Activated CD4-positive, alpha-beta T cell treated with anti-CD3 and anti-CD28 coated beads, Interleukin-2, amount 10 ng/mL, durations not matched to agents 24 days and 14 days (primary cell): ENCODE measurements at regions of chr4 and their contacts with region 1.

Region 1: GRCh38 chr4:145829629-145830395 is 108.8 kb downstream of the ZNF827 start:
- DNase-seq: peak; percentile 70
- H3K4me3 Mint-ChIP-seq: peak overlapping the region; percentile 76
- H3K27ac Mint-ChIP-seq: peak overlapping the region; percentile 87
- H3K4me1 Mint-ChIP-seq: peaks cover 43% of the 10 kb centered on the region
- H3K27me3 Mint-ChIP-seq: no peaks in the 10 kb centered on the region

Region 2: DNA sequence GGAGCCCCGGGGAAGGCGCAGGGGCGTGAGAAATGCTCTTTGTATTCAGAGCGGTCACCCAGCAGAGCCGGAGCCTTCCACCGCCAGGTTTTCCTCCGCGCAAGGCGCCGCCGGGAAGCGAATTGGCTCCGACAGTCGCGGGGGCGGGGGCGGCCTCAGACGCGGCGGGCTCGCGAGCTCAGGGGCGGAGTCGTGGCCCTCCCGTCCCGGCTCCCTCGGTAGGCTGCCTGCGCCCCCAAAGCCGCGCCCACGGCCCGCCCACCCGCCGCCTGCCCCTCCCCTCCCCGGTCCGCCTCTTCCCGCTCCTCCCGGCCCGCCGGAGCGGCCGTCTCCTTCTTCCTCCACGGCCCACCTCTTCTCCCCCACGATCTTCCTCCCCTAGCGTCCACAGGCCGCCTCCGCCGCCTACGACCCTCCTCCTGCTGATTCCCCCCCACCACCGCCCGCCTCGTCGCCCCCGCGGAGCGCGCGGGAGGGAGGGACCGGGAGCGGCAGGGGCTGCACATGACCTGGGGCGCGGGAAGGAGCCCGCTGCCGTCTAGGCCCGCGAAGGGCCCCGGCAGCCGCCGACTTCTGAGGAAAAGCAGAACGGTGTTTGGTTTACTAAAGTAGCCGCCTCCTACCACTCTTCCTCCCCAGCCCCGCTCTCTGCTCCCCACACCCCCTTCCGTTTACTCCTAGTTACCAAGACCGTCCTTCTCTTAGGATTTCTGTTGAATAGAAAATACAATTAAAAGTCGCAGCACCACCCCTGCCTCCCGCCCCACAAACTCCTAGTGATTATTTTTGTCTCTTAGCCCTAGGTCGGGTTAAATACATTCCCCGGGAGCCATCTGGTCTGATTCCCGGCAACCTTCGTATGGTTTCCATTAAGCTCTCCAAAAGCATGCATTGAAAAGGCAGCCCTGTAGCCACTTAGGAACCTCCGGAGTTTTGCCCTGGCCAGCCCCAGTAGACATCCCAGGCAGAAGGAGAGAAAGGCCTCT is 96.6 kb before region 1 on chr4:
- intact Hi-C with region 1: loop called (anchors 5 kb)
- DNase-seq: peak; percentile 96
- H3K4me3 Mint-ChIP-seq: peak overlapping the region; percentile 77
- H3K27ac Mint-ChIP-seq: peak overlapping the region; percentile 76
- H3K4me1 Mint-ChIP-seq: peaks cover 18% of the 10 kb centered on the region
- H3K27me3 Mint-ChIP-seq: peaks cover 2% of the 10 kb centered on the region

Region 3: DNA sequence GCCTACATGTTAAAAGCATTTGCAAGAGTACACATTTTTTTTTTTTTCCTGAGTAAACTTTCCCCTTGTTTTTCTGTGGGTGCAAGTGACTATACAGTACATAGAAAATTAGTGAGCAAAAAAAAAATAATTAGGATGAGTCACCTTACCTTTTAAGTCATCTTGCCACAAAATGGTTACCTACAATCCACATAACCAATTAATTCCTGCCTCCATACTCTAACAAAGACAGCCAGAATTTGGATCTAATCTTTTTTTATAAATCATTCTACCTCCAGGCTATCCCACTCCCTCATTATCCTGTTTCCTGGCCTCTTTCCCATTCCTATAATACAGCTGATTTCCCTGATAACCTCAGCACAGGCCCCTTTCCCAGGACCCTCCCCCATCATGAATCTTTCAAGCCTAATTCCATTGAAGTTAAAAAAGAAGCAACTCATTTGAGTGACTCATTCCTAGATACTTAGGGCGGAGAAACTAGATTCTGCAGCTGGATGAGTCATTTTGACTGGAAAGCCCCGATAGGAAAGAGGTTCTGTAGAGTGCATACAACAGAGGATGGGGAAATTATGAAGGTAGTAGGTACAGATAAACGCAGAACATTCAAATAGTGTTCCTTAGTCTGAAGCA is 21.7 kb before region 1 on chr4:
- intact Hi-C with region 1: loop called (anchors 1 kb)
- DNase-seq: peak; percentile 83
- H3K4me3 Mint-ChIP-seq: peak overlapping the region; percentile 60
- H3K27ac Mint-ChIP-seq: peak overlapping the region; percentile 95
- H3K4me1 Mint-ChIP-seq: peaks cover 44% of the 10 kb centered on the region
- H3K27me3 Mint-ChIP-seq: no peaks in the 10 kb centered on the region

Region 4: DNA sequence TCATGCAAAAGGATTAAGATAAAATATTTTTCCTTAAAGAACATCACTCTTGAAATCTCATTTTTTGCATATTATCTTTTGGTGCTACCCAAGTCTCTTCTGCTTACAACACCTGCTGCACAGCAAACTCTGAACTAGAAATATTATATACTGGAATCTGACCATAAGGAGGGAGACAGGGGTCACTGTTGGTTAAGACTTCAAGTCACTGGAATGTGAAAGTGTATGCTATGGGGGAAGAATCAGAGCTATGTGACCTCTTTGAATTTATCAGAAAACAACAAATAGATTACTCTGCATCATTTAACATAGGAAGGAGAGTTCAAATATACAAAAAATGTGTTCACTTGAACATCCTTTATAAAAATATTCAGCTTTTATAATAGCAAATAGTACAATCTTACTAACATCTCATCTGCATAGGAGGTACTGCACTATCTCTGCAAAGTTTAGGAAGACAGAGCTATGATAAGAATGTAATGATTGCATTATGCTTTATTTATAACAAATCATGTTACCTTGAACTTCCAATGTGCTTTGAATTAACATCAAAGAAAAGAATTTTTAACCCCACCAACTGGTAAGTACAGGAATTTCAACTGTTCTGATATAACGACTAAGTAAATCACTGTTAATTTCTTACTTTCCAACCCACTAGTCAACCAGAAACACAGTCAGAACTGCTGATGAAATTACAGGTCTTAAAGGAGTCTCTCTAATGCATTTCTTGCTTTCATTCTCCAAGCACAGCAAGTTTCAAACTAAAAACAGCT is 39.0 kb after region 1 on chr4:
- intact Hi-C with region 1: loop called (anchors 2 kb)
- DNase-seq: no peak
- H3K4me3 Mint-ChIP-seq: no peak overlapping the region
- H3K27ac Mint-ChIP-seq: no peak overlapping the region
- H3K4me1 Mint-ChIP-seq: peaks cover 23% of the 10 kb centered on the region
- H3K27me3 Mint-ChIP-seq: no peaks in the 10 kb centered on the region

Region 5: DNA sequence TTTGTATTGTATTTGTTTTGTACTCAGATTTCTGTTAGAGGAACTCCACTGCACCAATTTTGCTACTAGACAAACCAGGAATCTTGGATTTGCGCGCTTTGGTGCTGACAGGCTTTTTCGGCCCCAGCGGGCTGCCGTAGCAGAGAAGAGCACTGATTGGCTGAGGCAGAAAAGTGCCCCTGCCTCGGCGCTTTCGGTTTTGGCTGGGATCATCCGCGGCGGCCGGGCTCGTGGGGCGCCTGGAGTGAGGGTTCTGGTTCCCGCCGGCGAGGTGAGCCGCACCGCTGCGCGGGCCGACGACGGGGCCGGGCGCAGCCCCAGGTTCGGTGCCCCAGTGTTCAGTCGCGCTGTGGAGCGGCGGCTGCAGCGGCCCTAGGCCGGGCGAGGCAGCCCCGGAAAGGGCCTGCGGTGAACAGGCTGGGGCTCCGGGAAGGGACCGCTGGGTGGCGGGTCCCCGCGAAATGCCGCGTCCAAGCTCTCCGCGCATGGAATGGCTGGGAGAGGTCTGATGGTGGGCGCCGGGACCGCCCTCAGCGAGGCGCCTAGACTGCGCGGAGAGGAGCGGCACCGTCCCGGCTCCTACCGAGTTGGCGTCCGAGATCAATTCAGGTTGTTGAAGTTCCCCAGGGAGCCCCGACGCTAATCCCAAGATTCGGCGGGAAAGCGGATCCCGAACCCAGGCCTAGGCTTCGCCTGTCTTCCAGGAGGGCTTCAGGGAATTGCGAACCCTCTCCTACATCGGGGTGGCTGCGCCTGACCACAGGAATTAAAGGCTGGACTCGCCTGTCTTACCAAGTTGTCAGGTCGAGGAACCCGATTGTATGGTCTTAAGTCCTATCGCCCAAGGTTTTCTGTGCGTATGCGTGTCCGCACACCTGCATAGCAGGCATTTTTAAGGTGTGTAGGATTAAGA is 346.0 kb after region 1 on chr4 and contains the start of gene LSM6:
- intact Hi-C with region 1: loop called (anchors 10 kb)
- DNase-seq: peak; percentile 95
- H3K4me3 Mint-ChIP-seq: peak within 1 kb of the TSS; percentile 84
- H3K27ac Mint-ChIP-seq: peak within 1 kb of the TSS; percentile 89
- H3K4me1 Mint-ChIP-seq: peaks cover 27% of the 10 kb centered on the region
- H3K27me3 Mint-ChIP-seq: no peaks in the 10 kb centered on the region
- total RNA-seq, gene LSM6: 60.4 and 60.7 TPM in 2 replicates